Heart left ventricle (tissue), 16 donors: ENCODE measurements at regions of chr10 and their contacts with region 1.

Region 1: DNA sequence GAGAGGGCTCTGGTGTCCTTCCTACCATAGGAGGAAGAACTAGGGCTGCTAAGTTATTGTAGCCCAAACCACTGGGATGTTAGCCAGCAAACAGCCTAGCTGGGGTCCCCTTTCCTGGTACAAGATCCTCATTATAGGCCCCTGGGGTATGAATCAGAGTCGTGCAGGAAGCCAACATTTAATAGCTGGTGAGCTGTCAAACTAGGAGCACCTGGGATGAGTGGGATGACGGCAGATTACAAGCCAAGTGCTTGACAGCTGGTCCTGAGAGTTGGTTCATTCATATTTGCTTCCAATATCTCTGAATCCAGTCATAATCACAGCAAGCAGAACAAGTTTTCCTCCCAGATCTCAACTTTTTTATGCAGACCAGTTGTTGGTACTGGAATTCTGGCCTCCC is 25.1 kb upstream of the DNAJB12 start:
- DNase-seq: no peak
- ATAC-seq: peak in 2 of 4 donors; percentile 22 to 47
- H3K4me3 ChIP-seq: no peak overlapping the region
- H3K27ac ChIP-seq: no peak overlapping the region
- H3K4me1 ChIP-seq: no peaks in the 10 kb centered on the region
- H3K27me3 ChIP-seq: no peaks in the 10 kb centered on the region
- CTCF ChIP-seq: no peak
- POLR2A ChIP-seq: no peak

Region 2: DNA sequence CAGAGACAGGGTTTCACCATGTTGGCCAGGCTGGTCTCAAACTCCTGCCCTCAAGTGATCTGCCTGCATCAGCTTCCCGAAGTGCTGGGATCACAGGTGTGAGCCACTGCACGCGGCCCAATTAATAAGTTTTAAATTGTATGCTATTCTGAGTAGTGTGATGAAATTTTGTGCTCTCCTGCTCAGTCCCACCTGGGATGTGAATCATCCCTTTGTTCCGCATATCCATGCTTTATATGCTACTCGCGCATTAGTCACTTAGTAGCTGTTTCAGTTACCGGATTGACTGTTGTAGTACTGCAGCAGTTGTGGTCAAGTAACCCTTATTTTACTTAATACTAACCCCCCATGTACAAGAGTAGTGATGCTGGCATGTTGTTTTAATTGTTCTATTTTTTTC is 466.4 kb after region 1 on chr10:
- intact Hi-C with region 1: loop called in 1 of 10 experiments (anchors 10 kb)
- DNase-seq: no peak
- ATAC-seq: no peak
- H3K4me3 ChIP-seq: no peak overlapping the region
- H3K27ac ChIP-seq: no peak overlapping the region
- H3K4me1 ChIP-seq: peaks cover 0 to 3% (median 0%) of the 10 kb centered on the region in 12 donors
- H3K27me3 ChIP-seq: no peaks in the 10 kb centered on the region
- CTCF ChIP-seq: no peak
- POLR2A ChIP-seq: no peak